ENCODE measurements at regions of chr10 and their contacts with region 1.

Region 1: DNA sequence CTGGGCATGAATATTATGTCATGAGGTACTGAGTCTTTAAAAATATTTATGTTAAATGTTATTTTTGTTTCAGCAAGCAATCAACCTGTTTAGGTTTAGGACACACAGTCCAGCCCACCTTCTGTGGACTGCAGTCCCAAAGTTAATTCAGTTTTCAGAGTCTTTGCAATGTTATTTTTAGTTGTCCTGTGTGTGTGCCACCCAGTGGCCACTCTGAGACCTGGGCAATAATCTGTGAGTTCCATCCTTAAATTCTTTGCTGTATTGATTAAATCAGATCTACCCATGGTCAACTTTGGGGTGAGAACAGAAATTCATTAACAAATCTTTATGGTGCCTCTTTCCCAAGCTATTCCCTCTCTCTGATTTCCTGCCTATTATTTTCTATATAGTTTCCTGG is 415.1 kb downstream of the CCSER2 start:
- DNase-seq: no peak
- ATAC-seq: no peak
- H3K4me3 ChIP-seq: no peak overlapping the region
- H3K4me1 ChIP-seq: no peaks in the 10 kb centered on the region
- CTCF ChIP-seq: no peak

Region 2: GRCh38 chr10:84499846-84500245 is 243.6 kb before region 1 on chr10:
- intact Hi-C with region 1: no loop called
- DNase-seq: no peak
- ATAC-seq: no peak
- H3K4me3 ChIP-seq: no peak overlapping the region
- H3K4me1 ChIP-seq: no peaks in the 10 kb centered on the region
- CTCF ChIP-seq: no peak

Region 3: DNA sequence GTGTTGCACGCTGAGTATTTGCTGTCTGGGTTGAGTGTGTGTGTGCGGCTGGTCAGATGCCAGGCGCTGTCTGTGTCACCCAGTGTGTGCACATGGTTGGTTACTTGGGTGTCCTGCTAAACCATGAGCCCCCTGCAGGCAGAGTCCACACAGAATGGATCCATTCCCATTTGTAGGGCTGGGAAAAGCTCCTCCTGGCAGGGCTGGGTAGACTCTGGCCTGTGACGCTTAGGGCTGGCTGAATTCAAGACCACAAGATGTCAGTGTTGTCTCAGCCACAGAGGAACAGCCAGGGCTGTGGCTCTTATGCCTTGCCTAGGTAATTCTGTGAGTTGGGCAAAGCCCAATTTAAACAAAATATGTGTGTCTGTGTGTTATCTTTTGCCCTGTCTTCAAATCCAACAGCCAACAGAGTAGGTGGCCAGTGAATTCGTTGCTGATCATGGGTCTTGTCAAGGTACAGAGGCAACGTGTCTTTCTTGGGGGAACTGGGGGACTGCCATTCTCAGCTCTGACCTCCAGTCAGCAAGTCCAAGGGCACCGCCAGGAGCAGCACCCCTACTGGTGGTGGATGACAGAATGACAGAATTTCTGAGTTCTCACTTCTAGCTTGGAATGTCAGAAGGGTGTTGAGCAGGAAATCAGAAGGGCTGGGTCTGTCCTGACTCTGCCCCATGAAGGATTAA is 130.0 kb before region 1 on chr10:
- intact Hi-C with region 1: loop called in 1 of 2 experiments (anchors 5 kb)
- DNase-seq: peak in 2 of 3 donors; percentile 25 to 34
- ATAC-seq: peak; percentile 68
- H3K4me3 ChIP-seq: no peak overlapping the region
- H3K4me1 ChIP-seq: no peaks in the 10 kb centered on the region
- CTCF ChIP-seq: no peak

Region 4: DNA sequence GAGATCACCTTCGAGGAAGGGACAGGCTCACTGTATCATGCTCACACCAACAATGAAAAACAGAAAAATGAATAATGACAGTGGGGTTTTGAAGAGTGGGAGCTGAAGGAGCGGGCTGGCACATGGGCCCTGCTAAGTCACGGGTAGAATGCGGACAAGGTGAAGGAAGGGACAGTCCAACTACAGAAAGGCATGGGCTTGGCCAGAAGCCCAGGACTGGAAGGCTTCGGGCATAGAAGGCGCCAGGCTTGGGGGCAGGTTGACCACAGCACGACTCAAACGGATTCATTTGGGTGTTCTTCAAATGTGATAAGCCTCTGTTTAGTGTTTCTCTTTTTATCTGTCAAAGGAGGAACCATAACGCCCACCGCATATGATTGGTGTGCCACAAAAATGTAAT is 94.4 kb after region 1 on chr10:
- intact Hi-C with region 1: no loop called
- DNase-seq: no peak
- ATAC-seq: no peak
- H3K4me3 ChIP-seq: no peak overlapping the region
- H3K4me1 ChIP-seq: no peaks in the 10 kb centered on the region
- CTCF ChIP-seq: no peak